Activated CD4-positive, alpha-beta T cell treated with anti-CD3 and anti-CD28 coated beads, Interleukin-2, amount 10 ng/mL, durations not matched to agents 24 days and 14 days (primary cell): ENCODE measurements at regions of chr12 and their contacts with region 1.

Region 1: DNA sequence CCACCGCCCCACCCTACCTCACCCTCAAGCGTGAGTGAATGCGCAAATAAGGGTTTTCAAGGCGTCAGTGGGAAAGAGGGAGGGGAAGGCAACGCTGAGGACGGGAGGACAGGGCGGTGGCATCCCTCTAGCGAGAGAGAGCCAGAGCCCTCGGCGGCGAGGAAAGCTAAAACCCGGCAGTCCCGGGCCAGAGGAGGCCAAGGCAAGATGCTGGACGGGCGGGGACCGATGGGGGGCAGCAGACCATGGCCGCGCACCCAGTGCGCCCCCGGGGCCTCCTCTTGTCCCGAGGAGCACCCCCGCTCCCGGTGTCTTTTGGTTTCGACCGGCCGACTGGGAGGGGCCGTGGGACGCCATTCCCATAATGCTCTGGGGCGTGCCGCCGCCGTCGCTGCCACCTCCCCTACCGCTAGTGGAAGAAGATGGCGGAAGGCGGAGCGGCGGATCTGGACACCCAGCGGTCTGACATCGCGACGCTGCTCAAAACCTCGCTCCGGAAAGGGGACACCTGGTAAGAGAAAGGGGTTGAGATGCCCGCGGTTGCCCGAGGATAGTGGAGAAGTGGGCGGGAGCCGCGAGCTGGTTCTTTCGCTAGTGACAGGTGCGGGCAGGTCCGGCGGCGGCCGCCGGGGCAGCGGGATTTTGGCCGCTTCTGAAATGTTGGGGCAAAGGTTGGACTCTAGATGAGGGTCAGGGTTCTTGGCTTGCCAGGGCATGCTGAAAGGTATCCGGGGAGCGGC is at the start of gene USP15:
- DNase-seq: peak; percentile 99
- H3K4me3 Mint-ChIP-seq: peak within 1 kb of the TSS; percentile 94
- H3K27ac Mint-ChIP-seq: peak within 1 kb of the TSS; percentile 99
- H3K4me1 Mint-ChIP-seq: peaks cover 48% of the 10 kb centered on the region
- H3K27me3 Mint-ChIP-seq: no peaks in the 10 kb centered on the region
- total RNA-seq, gene USP15: 102 and 112 TPM in 2 replicates

Region 2: DNA sequence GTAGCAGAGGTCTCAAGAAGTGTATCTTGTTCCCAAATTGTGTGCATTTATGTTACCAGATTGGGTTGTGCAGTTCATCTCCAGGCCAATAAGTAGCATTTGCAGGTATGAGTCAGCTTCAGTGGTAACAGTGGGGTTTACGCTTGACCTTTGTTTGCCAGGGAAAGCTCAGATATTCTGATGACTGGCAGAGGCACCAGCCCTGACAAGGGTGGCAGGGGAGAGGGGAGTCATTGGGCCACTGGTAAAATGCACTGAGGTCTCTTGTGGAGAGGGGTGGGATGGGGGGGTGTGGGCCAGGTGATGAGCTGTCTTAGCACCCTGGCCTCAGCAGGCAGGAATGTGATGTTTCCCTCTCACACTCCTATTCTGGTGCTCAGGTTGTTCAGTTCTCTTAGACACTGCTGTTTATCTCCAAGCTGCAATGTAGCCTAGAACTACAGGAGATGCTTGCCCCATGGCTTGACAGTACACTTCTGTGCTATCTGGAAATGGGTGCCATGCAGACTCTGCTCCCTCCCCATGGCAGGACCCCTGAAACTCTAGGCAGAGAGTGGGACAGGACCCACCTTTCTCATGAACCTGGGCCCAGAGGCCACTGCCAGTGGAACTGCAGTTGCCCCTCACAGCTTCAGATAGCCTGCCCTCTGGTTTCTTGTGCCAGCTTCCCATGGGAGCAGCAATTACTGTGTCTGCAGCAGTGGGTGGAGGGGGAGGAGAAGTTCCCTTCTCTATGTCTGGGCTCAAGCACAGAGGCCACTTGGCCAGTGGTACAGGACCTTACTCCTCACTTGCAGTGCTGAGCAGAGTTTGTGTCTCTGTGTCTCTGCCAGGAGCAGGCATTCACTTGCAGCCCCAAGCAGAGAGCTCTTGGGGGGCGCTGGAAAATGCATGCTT is 31.9 kb after region 1 on chr12:
- intact Hi-C with region 1: loop called (anchors 5 kb)
- DNase-seq: no peak
- H3K4me3 Mint-ChIP-seq: peak overlapping the region; percentile 42
- H3K27ac Mint-ChIP-seq: peak overlapping the region; percentile 79
- H3K4me1 Mint-ChIP-seq: peaks cover 74% of the 10 kb centered on the region
- H3K27me3 Mint-ChIP-seq: no peaks in the 10 kb centered on the region

Region 3: GRCh38 chr12:62379026-62379722 is 119.0 kb after region 1 on chr12:
- intact Hi-C with region 1: loop called (anchors 5 kb)
- DNase-seq: no peak
- H3K4me3 Mint-ChIP-seq: no peak overlapping the region
- H3K27ac Mint-ChIP-seq: no peak overlapping the region
- H3K4me1 Mint-ChIP-seq: peaks cover 17% of the 10 kb centered on the region
- H3K27me3 Mint-ChIP-seq: no peaks in the 10 kb centered on the region

Region 4: GRCh38 chr12:62603061-62603810 is 343.1 kb after region 1 on chr12:
- intact Hi-C with region 1: loop called (anchors 2 kb)
- DNase-seq: peak; percentile 94
- H3K4me3 Mint-ChIP-seq: peak overlapping the region; percentile 92
- H3K27ac Mint-ChIP-seq: peak overlapping the region; percentile 99
- H3K4me1 Mint-ChIP-seq: peaks cover 30% of the 10 kb centered on the region
- H3K27me3 Mint-ChIP-seq: no peaks in the 10 kb centered on the region

Region 5: GRCh38 chr12:62799126-62799736 is 539.1 kb after region 1 on chr12:
- intact Hi-C with region 1: loop called (anchors 5 kb)
- DNase-seq: peak; percentile 87
- H3K4me3 Mint-ChIP-seq: no peak overlapping the region
- H3K27ac Mint-ChIP-seq: no peak overlapping the region
- H3K4me1 Mint-ChIP-seq: no peaks in the 10 kb centered on the region
- H3K27me3 Mint-ChIP-seq: peaks cover 10% of the 10 kb centered on the region